ENCODE measurements at regions of chr3 and their contacts with region 1.

Region 1: GRCh38 chr3:48635222-48636021 is at the start of gene SLC26A6:
- DNase-seq: peak; percentile 98
- H3K4me3 ChIP-seq: peak within 1 kb of the TSS; percentile 70 to 93 (median 76)
- H3K27ac ChIP-seq: peak within 1 kb of the TSS; percentile 32
- H3K4me1 ChIP-seq: peaks cover 17% of the 10 kb centered on the region
- H3K27me3 ChIP-seq: no peaks in the 10 kb centered on the region
- CTCF ChIP-seq: peak; percentile 62 to 76
- POLR2A ChIP-seq: peak; percentile 73
- total RNA-seq, gene SLC26A6: 32.2 and 34.8 TPM in 2 replicates

Region 2: DNA sequence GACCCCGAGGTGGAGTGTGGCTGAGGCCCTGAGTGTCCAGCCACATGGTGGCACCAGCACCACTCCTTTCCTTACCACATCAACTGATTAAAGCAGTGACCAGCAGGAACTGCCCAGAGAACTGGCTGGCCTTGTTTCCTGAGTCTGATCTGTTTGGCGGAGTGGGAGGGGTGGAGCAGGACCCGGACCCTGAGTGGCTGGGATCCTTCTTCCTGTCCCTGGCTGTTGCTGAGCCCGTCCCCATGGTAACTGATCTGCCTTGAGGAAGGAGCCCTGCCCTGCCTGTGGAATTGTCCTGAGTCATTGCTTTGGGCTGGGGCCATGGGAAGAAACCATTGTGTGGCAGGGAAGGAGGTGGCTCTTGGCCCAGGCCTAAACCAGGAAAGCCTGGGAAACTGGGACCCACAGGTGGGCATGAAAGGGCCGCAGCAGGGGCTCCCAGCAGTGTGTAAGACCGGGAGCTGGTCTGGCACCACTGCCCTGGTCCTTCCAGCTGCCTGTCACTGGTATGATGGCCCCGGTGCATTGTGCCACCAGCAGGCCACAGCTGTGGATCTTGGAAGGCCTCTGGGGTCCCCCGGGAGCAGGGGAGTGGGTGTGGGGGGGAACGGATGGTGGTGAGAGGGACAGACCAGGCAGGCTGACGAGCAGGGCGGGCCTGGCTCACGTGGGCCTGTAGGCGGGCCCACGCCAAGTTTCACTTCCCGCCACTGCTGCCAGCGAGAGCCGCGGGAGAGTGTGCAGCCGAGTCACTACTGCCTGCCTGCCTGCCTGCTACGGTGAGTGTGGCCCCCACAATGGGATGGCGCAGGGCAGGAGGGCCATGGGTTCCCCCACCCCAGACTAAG is 169.7 kb before region 1 on chr3:
- CTCF ChIA-PET with region 1: no interaction called
- POLR2A ChIA-PET with region 1: no interaction called
- dilution Hi-C with region 1: no loop called
- intact Hi-C with region 1: loop called (anchors 1 kb)
- DNase-seq: peak; percentile 100
- H3K4me3 ChIP-seq: peak overlapping the region in 2 of 3 experiments; percentile 44 to 45
- H3K27ac ChIP-seq: peak overlapping the region; percentile 98
- H3K4me1 ChIP-seq: peaks cover 24% of the 10 kb centered on the region
- H3K27me3 ChIP-seq: no peaks in the 10 kb centered on the region
- CTCF ChIP-seq: peak; percentile 81 to 82
- POLR2A ChIP-seq: peak; percentile 92

Region 3: GRCh38 chr3:48609088-48610005 is 26.1 kb before region 1 on chr3 and contains the start of gene UQCRC1:
- CTCF ChIA-PET with region 1: interaction called, 11 read pairs
- POLR2A ChIA-PET with region 1: no interaction called
- dilution Hi-C with region 1: no loop called
- intact Hi-C with region 1: loop called (anchors 1 kb)
- DNase-seq: peak; percentile 96
- H3K4me3 ChIP-seq: peak within 1 kb of the TSS; percentile 52 to 85 (median 73)
- H3K27ac ChIP-seq: peak within 1 kb of the TSS; percentile 9
- H3K4me1 ChIP-seq: peaks cover 13% of the 10 kb centered on the region
- H3K27me3 ChIP-seq: no peaks in the 10 kb centered on the region
- CTCF ChIP-seq: peak; percentile 52 to 84
- POLR2A ChIP-seq: peak; percentile 96
- total RNA-seq, gene UQCRC1: 184 and 186 TPM in 2 replicates

Region 4: DNA sequence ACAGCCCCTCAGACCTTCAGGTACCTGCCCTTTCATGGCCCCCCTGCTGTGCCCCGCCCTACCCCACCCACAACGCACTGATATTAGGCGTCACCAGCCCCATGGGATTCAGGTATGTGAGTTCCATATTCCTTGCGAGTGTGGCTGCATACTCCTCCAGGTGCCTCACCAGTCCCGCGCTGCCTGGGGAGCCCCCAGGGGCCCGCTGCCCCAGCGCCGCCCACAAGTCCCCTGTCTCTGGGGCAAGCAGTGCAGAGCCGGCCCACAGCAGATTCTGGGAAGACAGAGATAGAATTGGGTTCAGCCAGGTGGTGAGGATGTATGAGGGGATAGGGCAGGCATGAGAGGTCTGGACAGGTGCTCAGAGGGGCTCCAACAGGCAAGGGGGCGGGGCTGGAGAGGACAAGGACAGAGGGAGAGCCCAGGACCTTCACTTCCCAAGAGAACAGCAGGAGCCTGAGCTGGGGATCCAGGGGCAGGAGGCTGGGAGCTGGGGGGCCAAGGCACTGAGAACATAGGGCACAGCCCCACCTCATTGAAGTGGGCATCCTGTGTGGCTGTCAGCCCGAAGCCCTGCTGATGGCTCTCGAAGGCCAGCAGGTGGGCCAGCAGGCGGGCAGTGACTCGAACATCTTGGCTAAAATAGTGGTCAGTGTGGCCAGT is 12.9 kb after region 1 on chr3:
- CTCF ChIA-PET with region 1: interaction called, 32 read pairs
- POLR2A ChIA-PET with region 1: no interaction called
- dilution Hi-C with region 1: no loop called
- intact Hi-C with region 1: no loop called
- DNase-seq: no peak
- H3K4me3 ChIP-seq: no peak overlapping the region
- H3K27ac ChIP-seq: no peak overlapping the region
- H3K4me1 ChIP-seq: no peaks in the 10 kb centered on the region
- H3K27me3 ChIP-seq: no peaks in the 10 kb centered on the region
- CTCF ChIP-seq: no peak
- POLR2A ChIP-seq: no peak

Region 5: GRCh38 chr3:48663415-48664312 is 28.2 kb after region 1 on chr3:
- CTCF ChIA-PET with region 1: interaction called, 20 read pairs
- POLR2A ChIA-PET with region 1: no interaction called
- dilution Hi-C with region 1: no loop called
- intact Hi-C with region 1: loop called (anchors 1 kb)
- DNase-seq: peak; percentile 87
- H3K4me3 ChIP-seq: peak overlapping the region; percentile 28 to 42 (median 28)
- H3K27ac ChIP-seq: peak overlapping the region; percentile 72
- H3K4me1 ChIP-seq: peaks cover 6% of the 10 kb centered on the region
- H3K27me3 ChIP-seq: peaks cover 8 to 10% of the 10 kb centered on the region in 2 experiments
- CTCF ChIP-seq: peak; percentile 85 to 89
- POLR2A ChIP-seq: peak; percentile 63

Region 6: GRCh38 chr3:48716982-48717746 is 81.7 kb after region 1 on chr3 and contains the start of gene IP6K2:
- CTCF ChIA-PET with region 1: no interaction called
- POLR2A ChIA-PET with region 1: no interaction called
- dilution Hi-C with region 1: no loop called
- intact Hi-C with region 1: loop called (anchors 1 kb)
- DNase-seq: peak; percentile 99
- H3K4me3 ChIP-seq: peak within 1 kb of the TSS; percentile 81 to 99 (median 93)
- H3K27ac ChIP-seq: peak within 1 kb of the TSS; percentile 88
- H3K4me1 ChIP-seq: peaks cover 8% of the 10 kb centered on the region
- H3K27me3 ChIP-seq: peaks cover 5 to 8% of the 10 kb centered on the region in 2 experiments
- CTCF ChIP-seq: no peak
- POLR2A ChIP-seq: peak; percentile 97
- total RNA-seq, gene IP6K2: 72.4 and 81.8 TPM in 2 replicates

Measured in endothelial cell of umbilical vein (primary cell).